Right ventricle myocardium superior (tissue), 1 donor: ENCODE measurements at regions of chr6 and their contacts with region 1.

Region 1: GRCh38 chr6:7725849-7726415 is at the start of gene BMP6:
- DNase-seq: peak; percentile 94
- ATAC-seq: peak; percentile 97
- total RNA-seq, gene BMP6: 2.6 TPM

Region 2: GRCh38 chr6:7604003-7604402 is 121.9 kb before region 1 on chr6:
- intact Hi-C with region 1: no loop called
- DNase-seq: peak; percentile 60
- ATAC-seq: peak; percentile 98

Region 3: GRCh38 chr6:7769702-7770101 is 43.8 kb after region 1 on chr6:
- intact Hi-C with region 1: no loop called
- DNase-seq: no peak
- ATAC-seq: no peak

Region 4: GRCh38 chr6:7910654-7911344 is 184.9 kb after region 1 on chr6 and contains the start of gene TXNDC5:
- intact Hi-C with region 1: loop called (anchors 10 kb)
- DNase-seq: peak; percentile 89
- ATAC-seq: peak; percentile 93
- total RNA-seq, gene TXNDC5: 39.5 TPM

Region 5: DNA sequence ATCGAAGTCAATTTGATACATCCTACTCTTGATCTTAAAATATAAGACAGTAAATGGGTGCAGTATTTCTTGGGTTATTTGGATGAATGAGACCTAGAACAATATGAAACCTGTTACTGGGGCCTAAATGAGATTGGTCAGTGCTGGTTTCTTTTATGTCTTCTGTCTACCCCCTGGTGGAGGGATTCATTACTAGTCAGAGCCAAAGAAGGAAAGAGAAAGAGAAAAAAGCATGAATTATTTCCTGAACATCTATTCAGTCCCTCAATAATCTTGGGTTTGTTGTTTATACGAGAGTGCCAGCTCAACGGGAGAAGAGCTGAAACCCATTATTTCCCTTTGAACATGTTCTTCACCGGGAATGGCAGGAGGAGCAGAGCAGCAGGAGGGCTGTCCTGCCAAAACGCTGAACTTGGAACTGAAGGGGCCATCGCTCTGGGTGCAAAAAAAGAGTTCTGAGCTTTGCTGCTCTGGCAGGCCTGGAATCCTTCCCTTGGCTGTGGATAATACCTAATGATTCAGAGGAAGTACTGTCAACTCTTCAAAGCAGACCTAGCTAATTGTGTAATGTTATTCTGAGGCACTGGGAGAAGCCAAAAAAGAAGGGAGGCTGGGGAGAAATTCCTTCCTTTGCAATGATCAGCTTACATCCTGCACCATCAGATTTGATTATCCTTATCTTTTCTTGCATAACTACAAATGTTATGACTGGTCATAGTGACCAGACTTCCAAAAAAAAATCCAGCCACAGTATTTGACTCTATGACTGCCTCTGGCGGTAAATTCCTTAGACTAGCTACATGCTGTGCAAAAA is 266.3 kb after region 1 on chr6:
- intact Hi-C with region 1: loop called (anchors 5 kb)
- DNase-seq: peak; percentile 46
- ATAC-seq: peak; percentile 84

Region 6: GRCh38 chr6:8005136-8005535 is 279.2 kb after region 1 on chr6:
- intact Hi-C with region 1: no loop called
- DNase-seq: no peak
- ATAC-seq: no peak

Region 7: GRCh38 chr6:8059129-8059528 is 333.2 kb after region 1 on chr6:
- intact Hi-C with region 1: loop called (anchors 5 kb)
- DNase-seq: no peak
- ATAC-seq: no peak